ENCODE measurements at regions of chr17 and their contacts with region 1.

Region 1: GRCh38 chr17:38485146-38485468 is 56.8 kb downstream of the ARHGAP23 start:
- DNase-seq: no peak
- ATAC-seq: no peak
- H3K4me3 ChIP-seq: no peak overlapping the region
- H3K27ac ChIP-seq: no peak overlapping the region
- H3K4me1 ChIP-seq: peaks cover 0 to 6% of the 10 kb centered on the region in 2 experiments; a peak in 2 of 5 replicates
- H3K27me3 ChIP-seq: peaks cover 0 to 22% of the 10 kb centered on the region in 2 experiments; a peak in 2 of 5 replicates
- CTCF ChIP-seq: no peak
- EP300 ChIP-seq: no peak
- POLR2A ChIP-seq: no peak
- RAD21 ChIP-seq: no peak

Region 2: DNA sequence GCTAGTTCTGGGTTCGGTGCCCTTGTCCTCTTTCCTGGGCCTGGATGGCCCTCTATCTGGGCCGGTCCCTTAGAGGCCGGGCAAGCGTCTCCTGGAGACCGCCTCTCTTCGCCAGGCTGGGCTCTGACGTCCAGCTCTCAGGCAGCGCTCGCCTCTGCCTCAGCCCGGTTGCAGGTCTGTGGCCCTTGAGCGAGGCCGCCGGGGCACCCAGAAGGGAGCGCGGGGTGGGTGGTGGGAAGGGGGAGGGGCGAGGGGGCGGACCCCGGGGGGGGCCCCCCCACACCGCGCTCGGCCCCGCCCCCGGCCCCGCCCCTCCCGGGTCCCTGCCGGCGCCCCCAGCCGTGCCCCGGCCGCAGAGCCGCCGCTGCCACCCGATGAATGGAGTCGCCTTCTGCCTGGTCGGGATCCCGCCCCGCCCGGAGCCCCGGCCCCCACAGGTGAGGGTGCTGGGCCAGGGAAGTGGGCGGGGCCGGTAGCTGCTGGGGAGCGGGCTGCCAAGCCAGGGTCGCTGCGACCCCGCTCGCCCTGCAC is 56.9 kb before region 1 on chr17 and contains the start of gene ARHGAP23:
- CTCF ChIA-PET with region 1: interaction called, 8 read pairs
- POLR2A ChIA-PET with region 1: interaction called, 3 read pairs
- in situ Hi-C with region 1: no loop called
- intact Hi-C with region 1: loop called (anchors 1 kb)
- DNase-seq: peak in 3 of 4 experiments; percentile 63 to 90 (median 90)
- ATAC-seq: peak; percentile 57
- H3K4me3 ChIP-seq: no peak within 1 kb of the TSS
- H3K27ac ChIP-seq: no peak within 1 kb of the TSS
- H3K4me1 ChIP-seq: peaks cover 0 to 17% of the 10 kb centered on the region in 2 experiments; a peak in 2 of 5 replicates
- H3K27me3 ChIP-seq: peaks cover 4 to 28% of the 10 kb centered on the region in 2 experiments; a peak in 4 of 5 replicates
- CTCF ChIP-seq: no peak
- EP300 ChIP-seq: no peak
- POLR2A ChIP-seq: no peak
- RAD21 ChIP-seq: no peak
- polyA plus RNA-seq, gene ARHGAP23: 0.01 to 0.03 TPM

Region 3: DNA sequence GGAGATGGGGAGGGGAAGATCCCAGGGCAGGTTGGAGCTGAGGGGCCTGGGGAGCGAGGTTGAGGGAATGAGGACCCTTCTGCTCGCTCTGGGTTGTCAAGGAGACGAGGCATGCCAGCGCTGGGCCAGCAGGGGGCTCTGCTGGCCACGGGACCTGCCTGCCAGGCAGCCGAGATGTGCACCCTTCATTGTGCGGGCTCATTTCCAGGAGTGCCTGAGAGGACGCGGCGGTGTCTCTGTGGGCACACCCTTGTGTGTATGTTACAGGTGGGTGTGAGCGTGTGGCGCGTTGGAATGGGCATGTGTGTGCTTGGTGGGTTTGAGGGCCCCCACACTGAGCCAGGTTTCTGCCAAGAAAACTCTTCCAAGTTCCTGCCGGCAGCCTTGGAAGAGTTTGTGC is 41.0 kb before region 1 on chr17:
- CTCF ChIA-PET with region 1: interaction called, 3 read pairs
- POLR2A ChIA-PET with region 1: no interaction called
- in situ Hi-C with region 1: loop called (anchors 5 kb)
- intact Hi-C with region 1: loop called (anchors 2 kb)
- DNase-seq: peak; percentile 71 to 83 (median 80)
- ATAC-seq: peak; percentile 96
- H3K4me3 ChIP-seq: no peak overlapping the region
- H3K27ac ChIP-seq: no peak overlapping the region
- H3K4me1 ChIP-seq: peaks cover 0 to 8% of the 10 kb centered on the region in 2 experiments; a peak in 2 of 5 replicates
- H3K27me3 ChIP-seq: peaks cover 5 to 26% of the 10 kb centered on the region in 2 experiments; a peak in 3 of 5 replicates
- CTCF ChIP-seq: peak; percentile 88 to 92 (median 91)
- EP300 ChIP-seq: no peak
- POLR2A ChIP-seq: no peak
- RAD21 ChIP-seq: peak; percentile 65 to 93

Region 4: DNA sequence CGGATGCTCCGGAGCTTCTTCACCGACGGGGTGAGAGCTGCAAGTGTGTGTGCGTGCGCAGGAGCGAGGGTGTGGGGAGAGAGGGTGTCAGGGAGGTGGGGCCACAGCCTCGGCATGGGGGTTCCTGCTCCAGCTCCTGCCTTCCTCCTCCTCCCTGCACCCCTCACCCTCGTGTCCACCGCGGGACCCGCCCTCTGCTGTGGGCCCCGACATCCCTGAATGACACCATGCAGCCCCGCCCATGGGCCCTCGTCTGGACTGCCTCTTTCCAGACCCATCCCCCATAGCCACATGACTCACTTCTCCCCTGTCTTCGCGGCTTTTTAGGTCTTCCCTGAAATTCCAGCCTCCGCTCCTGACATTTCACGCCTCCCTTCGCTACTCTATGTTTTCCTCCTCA is 15.2 kb before region 1 on chr17:
- CTCF ChIA-PET with region 1: no interaction called
- POLR2A ChIA-PET with region 1: no interaction called
- in situ Hi-C with region 1: no loop called
- intact Hi-C with region 1: no loop called
- DNase-seq: peak; percentile 26 to 63 (median 51)
- ATAC-seq: no peak
- H3K4me3 ChIP-seq: no peak overlapping the region
- H3K27ac ChIP-seq: no peak overlapping the region
- H3K4me1 ChIP-seq: peaks cover 5 to 37% of the 10 kb centered on the region in 2 experiments; a peak in 4 of 5 replicates
- H3K27me3 ChIP-seq: peaks cover 0 to 19% of the 10 kb centered on the region in 2 experiments; a peak in 2 of 5 replicates
- CTCF ChIP-seq: no peak
- EP300 ChIP-seq: no peak
- POLR2A ChIP-seq: no peak
- RAD21 ChIP-seq: no peak